Activated CD4-positive, alpha-beta T cell treated with anti-CD3 and anti-CD28 coated beads, Interleukin-2, amount 10 ng/mL, durations not matched to agents 24 days and 14 days (primary cell): ENCODE measurements at regions of chr1 and their contacts with region 1.

Region 1: DNA sequence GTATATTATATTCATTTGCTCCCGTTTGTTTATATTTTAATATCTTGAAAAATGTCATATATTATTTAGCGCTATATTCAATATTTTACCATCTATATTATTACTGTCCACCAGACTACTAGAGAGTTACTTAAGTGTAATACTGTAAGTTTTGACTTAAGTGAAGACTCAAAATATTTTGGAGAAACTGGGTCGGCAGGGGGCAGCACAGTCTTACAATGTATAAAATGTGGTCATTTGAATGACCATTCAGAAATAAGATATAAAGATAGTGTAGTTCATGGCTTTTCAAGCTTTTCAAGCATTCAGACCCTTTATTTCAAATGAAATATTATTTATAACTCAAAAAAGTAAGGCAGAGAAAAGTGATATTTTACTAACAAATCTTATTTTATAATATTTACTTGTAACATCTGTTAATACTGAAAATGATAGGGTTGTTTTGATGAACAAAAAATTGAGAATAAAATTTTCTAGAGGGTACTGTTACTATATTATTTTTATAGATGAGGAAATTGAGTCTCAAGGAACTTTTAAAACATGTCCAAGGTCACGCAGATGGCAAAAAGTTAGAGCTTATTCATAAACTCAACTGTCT is 89.0 kb upstream of the SERTAD4 start:
- DNase-seq: peak; percentile 80
- H3K4me3 Mint-ChIP-seq: no peak overlapping the region
- H3K27ac Mint-ChIP-seq: no peak overlapping the region
- H3K4me1 Mint-ChIP-seq: no peaks in the 10 kb centered on the region
- H3K27me3 Mint-ChIP-seq: peaks cover 12% of the 10 kb centered on the region

Region 2: GRCh38 chr1:210311726-210312493 is 168.3 kb after region 1 on chr1:
- intact Hi-C with region 1: loop called (anchors 1 kb)
- DNase-seq: no peak
- H3K4me3 Mint-ChIP-seq: peak overlapping the region; percentile 76
- H3K27ac Mint-ChIP-seq: no peak overlapping the region
- H3K4me1 Mint-ChIP-seq: peaks cover 4% of the 10 kb centered on the region
- H3K27me3 Mint-ChIP-seq: peaks cover 32% of the 10 kb centered on the region